ENCODE measurements at regions of chr3 and their contacts with region 1.

Region 1: GRCh38 chr3:24264748-24265158 is 229.9 kb downstream of the THRB start:
- DNase-seq: no peak
- H3K4me3 ChIP-seq: no peak overlapping the region
- H3K27ac ChIP-seq: no peak overlapping the region
- H3K4me1 ChIP-seq: peaks cover 21% of the 10 kb centered on the region
- H3K27me3 ChIP-seq: no peaks in the 10 kb centered on the region
- CTCF ChIP-seq: peak; percentile 77

Region 2: GRCh38 chr3:24462737-24463136 is 198.0 kb after region 1 on chr3:
- intact Hi-C with region 1: no loop called
- DNase-seq: no peak
- H3K4me3 ChIP-seq: no peak overlapping the region
- H3K27ac ChIP-seq: no peak overlapping the region
- H3K4me1 ChIP-seq: peaks cover 25% of the 10 kb centered on the region
- H3K27me3 ChIP-seq: no peaks in the 10 kb centered on the region
- CTCF ChIP-seq: no peak

Region 3: GRCh38 chr3:24494618-24495325 is 230.0 kb after region 1 on chr3 and contains the start of gene THRB:
- intact Hi-C with region 1: loop called (anchors 10 kb)
- DNase-seq: peak; percentile 79
- H3K4me3 ChIP-seq: peak within 1 kb of the TSS; percentile 80
- H3K27ac ChIP-seq: peak within 1 kb of the TSS; percentile 95
- H3K4me1 ChIP-seq: peaks cover 64% of the 10 kb centered on the region
- H3K27me3 ChIP-seq: peaks cover 21% of the 10 kb centered on the region
- CTCF ChIP-seq: peak; percentile 56
- total RNA-seq, gene THRB: 32.8 TPM

Measured in left ventricle myocardium inferior (tissue), 1 donor.